MCF 10A (cell line): ENCODE measurements at regions of chr21 and their contacts with region 1.

Region 1: DNA sequence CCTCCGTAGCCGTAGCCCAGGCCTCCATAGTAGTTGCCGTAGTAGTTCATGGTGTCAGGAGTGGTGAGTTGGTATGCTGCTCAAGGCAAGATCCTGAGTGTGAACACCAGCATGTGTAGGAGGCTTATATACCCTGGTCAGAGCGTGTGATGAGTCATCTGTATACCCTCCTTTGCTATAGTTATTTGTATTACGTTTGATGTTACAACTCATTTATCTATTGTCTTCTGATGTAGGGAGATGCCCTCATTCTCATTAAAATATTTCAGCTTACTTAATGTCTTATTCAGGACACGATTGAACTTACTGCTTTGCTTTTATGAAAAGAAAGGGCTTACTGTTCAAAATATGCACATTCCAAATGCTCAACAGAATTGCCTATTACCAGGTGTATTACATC is at the start of gene KRTAP19-5:
- DNase-seq: no peak
- H3K4me3 Mint-ChIP-seq: no peak within 1 kb of the TSS
- H3K27ac Mint-ChIP-seq: no peak within 1 kb of the TSS
- H3K4me1 Mint-ChIP-seq: no peaks in the 10 kb centered on the region
- H3K27me3 Mint-ChIP-seq: peaks cover 44% of the 10 kb centered on the region
- CTCF ChIP-seq: no peak
- total RNA-seq, gene KRTAP19-5: not detected in 2 replicates

Region 2: DNA sequence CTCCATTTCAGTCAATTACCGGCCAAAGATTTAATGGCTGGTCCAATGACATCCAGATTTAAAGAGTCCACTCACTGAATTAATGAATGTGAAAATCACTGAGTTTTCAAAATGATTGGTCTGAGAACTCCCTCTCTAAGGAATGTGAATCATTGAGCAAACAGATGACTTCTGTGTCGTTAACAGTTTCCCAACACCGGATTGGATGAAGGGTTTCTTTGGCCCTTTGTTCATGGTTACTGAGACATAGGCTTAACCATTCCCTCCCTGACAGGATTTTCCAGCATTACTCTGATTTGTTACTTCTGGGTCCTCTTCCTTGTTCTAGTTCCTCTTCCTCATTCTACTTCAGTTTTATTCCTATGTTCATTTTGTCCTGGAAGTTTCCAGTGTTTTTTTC is 334.0 kb before region 1 on chr21:
- CTCF ChIA-PET with region 1: no interaction called
- POLR2A ChIA-PET with region 1: no interaction called
- intact Hi-C with region 1: no loop called
- DNase-seq: no peak
- H3K4me3 Mint-ChIP-seq: no peak overlapping the region
- H3K27ac Mint-ChIP-seq: no peak overlapping the region
- H3K4me1 Mint-ChIP-seq: peaks cover 6% of the 10 kb centered on the region
- H3K27me3 Mint-ChIP-seq: no peaks in the 10 kb centered on the region
- CTCF ChIP-seq: no peak

Region 3: GRCh38 chr21:30391492-30392025 is 110.5 kb before region 1 on chr21:
- CTCF ChIA-PET with region 1: no interaction called
- POLR2A ChIA-PET with region 1: no interaction called
- intact Hi-C with region 1: no loop called
- DNase-seq: no peak
- H3K4me3 Mint-ChIP-seq: no peak overlapping the region
- H3K27ac Mint-ChIP-seq: no peak overlapping the region
- H3K4me1 Mint-ChIP-seq: no peaks in the 10 kb centered on the region
- H3K27me3 Mint-ChIP-seq: peaks cover 95% of the 10 kb centered on the region
- CTCF ChIP-seq: no peak

Region 4: GRCh38 chr21:30605968-30606367 is 103.9 kb after region 1 on chr21:
- CTCF ChIA-PET with region 1: no interaction called
- POLR2A ChIA-PET with region 1: no interaction called
- intact Hi-C with region 1: no loop called
- DNase-seq: no peak
- H3K4me3 Mint-ChIP-seq: no peak overlapping the region
- H3K27ac Mint-ChIP-seq: no peak overlapping the region
- H3K4me1 Mint-ChIP-seq: no peaks in the 10 kb centered on the region
- H3K27me3 Mint-ChIP-seq: no peaks in the 10 kb centered on the region
- CTCF ChIP-seq: no peak

Region 5: DNA sequence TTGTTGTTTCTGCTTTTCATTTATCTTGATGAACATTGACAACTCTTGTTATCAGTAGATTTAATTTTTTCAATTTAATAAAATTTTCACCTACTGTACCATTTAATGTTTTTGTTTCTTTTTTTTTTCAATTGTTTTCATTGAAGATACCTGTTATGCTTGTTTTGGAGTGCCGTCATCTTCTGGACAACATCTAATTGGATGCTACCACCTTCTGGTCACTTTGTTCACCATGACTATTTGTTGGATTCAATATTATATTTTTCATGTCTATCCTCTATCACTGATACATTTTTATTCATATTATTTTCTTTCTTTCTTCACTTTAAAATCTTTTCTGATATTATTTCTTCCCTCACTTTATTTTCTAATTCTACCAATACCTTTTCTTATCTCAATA is 231.0 kb after region 1 on chr21:
- CTCF ChIA-PET with region 1: interaction called, 4 read pairs
- POLR2A ChIA-PET with region 1: no interaction called
- intact Hi-C with region 1: loop called (anchors 5 kb)
- DNase-seq: peak; percentile 4
- H3K4me3 Mint-ChIP-seq: no peak overlapping the region
- H3K27ac Mint-ChIP-seq: no peak overlapping the region
- H3K4me1 Mint-ChIP-seq: no peaks in the 10 kb centered on the region
- H3K27me3 Mint-ChIP-seq: peaks cover 76% of the 10 kb centered on the region
- CTCF ChIP-seq: no peak

Region 6: DNA sequence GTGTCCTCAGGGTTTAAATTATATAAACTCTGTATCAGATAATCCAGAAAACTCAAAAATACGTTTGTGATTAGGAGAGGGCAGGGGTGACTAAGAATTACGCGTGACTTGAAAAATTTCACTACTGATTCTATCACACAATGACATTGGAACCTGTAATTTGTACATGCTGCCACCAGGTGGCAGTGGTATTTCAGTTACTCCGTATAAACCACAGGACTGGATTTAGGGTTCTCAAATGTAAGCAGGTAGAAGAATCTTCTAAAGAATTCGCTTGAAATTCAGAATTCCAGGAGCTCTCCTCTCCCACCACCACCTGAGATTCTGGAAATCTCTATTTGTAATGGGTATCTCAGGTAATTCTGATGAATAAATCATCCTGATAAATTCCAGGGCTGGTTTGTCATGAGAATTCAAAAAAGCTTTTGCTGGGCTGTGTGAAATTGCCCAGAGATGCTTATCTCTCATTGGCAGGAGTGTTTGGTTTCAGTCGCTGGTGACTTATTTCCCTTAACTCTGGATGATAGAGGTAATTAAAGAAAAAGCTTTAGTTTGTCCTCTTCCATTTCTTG is 329.2 kb after region 1 on chr21:
- CTCF ChIA-PET with region 1: no interaction called
- POLR2A ChIA-PET with region 1: no interaction called
- intact Hi-C with region 1: loop called (anchors 10 kb)
- DNase-seq: peak; percentile 50
- H3K4me3 Mint-ChIP-seq: no peak overlapping the region
- H3K27ac Mint-ChIP-seq: no peak overlapping the region
- H3K4me1 Mint-ChIP-seq: no peaks in the 10 kb centered on the region
- H3K27me3 Mint-ChIP-seq: peaks cover 8% of the 10 kb centered on the region
- CTCF ChIP-seq: peak; percentile 72